ENCODE measurements at regions of chr16 and their contacts with region 1.

Region 1: GRCh38 chr16:78128913-78129312 is 29.5 kb downstream of the WWOX start:
- DNase-seq: no peak
- ATAC-seq: peak in 2 of 4 donors; percentile 46 to 54
- H3K4me3 ChIP-seq: peak overlapping the region in 4 of 12 donors; percentile 0 to 13 (median 3)
- H3K27ac ChIP-seq: peak overlapping the region in 3 of 12 donors; percentile 10 to 33 (median 28)
- H3K4me1 ChIP-seq: peaks cover 0 to 31% (median 20%) of the 10 kb centered on the region in 12 donors
- H3K27me3 ChIP-seq: no peaks in the 10 kb centered on the region
- CTCF ChIP-seq: no peak
- POLR2A ChIP-seq: no peak

Region 2: DNA sequence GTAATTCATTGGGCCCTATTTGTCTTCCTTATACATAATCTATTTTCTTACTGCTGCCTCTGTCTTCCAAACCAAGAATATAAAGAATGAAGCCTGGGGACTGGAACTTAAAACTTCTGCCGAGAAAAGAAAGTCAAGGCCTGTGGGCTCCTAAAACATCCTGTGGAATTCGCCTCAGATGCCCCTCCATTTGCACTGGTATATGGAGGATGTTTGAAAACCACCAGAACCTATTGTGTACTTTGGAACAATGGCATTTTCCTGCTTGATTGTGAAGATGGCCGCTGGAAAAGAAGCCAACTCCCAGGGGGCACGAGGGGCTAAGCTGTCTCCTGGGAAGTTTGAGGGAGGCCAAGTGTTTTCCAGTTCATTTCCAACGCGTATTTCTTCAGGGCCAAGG is 93.0 kb after region 1 on chr16:
- intact Hi-C with region 1: loop called in 3 of 10 experiments (anchors 2 to 5 kb)
- DNase-seq: no peak
- ATAC-seq: no peak
- H3K4me3 ChIP-seq: no peak overlapping the region
- H3K27ac ChIP-seq: no peak overlapping the region
- H3K4me1 ChIP-seq: peaks cover 0 to 10% (median 0%) of the 10 kb centered on the region in 12 donors
- H3K27me3 ChIP-seq: no peaks in the 10 kb centered on the region
- CTCF ChIP-seq: no peak
- POLR2A ChIP-seq: no peak